ENCODE measurements at regions of chr1 and their contacts with region 1.

Region 1: GRCh38 chr1:72282271-72283021 is at the start of gene NEGR1:
- DNase-seq: peak; percentile 95
- H3K4me3 ChIP-seq: peak within 1 kb of the TSS; percentile 63 to 78 (median 70)
- H3K27ac ChIP-seq: peak within 1 kb of the TSS; percentile 89
- H3K4me1 ChIP-seq: peaks cover 15% of the 10 kb centered on the region
- H3K27me3 ChIP-seq: no peaks in the 10 kb centered on the region
- CTCF ChIP-seq: peak in 1 of 2 donors; percentile 32
- total RNA-seq, gene NEGR1: 0.17 to 2.0 TPM

Region 2: DNA sequence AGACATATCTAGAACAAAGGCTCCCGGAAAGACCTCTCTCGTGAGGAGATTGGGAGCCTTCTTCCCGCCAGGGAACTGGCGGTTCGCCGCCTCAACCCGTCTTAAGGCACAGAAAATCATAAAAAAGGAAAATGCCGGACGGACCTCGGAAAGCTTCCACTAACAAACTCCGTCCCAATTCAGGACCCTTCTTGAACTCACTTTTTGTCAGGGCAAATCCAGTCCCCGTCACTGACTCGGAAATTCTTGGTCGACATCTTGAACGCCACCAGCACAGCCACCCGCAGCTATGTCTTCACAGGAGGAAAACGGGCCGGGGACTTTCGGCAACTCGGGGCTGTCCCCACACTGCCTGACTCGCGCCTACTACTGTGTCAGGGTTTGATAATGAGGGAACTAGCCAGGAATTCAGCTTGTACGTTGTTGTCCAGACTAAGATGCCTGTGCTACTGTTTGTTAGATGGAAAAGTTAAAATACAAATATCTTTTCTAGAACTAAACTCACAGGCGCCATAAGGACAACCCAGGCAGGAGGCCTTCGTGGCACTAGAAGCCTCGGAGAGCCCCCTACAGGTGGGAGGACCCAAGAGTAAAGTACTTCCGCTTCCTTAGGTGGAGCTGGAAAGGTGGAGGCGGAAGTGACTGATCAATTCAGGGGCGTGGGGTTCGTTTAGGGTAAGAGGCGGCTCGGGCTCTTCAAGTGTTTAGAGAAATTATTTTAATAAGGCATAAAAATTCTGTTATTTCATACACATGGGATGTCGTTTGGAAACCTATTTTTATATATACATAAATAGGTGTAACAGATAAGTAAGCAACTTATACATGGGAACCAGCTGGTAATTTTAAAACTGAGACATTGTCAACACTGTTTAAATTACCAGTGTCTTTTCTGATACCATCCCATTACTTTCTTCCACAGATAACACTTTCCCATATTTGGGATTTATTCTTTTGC is 1201.4 kb before region 1 on chr1 and contains the start of gene ZRANB2:
- CTCF ChIA-PET with region 1: no interaction called
- dilution Hi-C with region 1: no loop called
- in situ Hi-C with region 1: no loop called
- intact Hi-C with region 1: loop called (anchors 10 kb)
- DNase-seq: peak; percentile 90
- H3K4me3 ChIP-seq: peak within 1 kb of the TSS; percentile 83 to 99 (median 92)
- H3K27ac ChIP-seq: peak within 1 kb of the TSS; percentile 98
- H3K4me1 ChIP-seq: peaks cover 7% of the 10 kb centered on the region
- H3K27me3 ChIP-seq: no peaks in the 10 kb centered on the region
- CTCF ChIP-seq: peak; percentile 60 to 75
- total RNA-seq, gene ZRANB2: 40.7 to 80.8 TPM

Region 3: GRCh38 chr1:71921935-71922559 is 360.4 kb before region 1 on chr1:
- CTCF ChIA-PET with region 1: no interaction called
- dilution Hi-C with region 1: no loop called
- in situ Hi-C with region 1: no loop called
- intact Hi-C with region 1: no loop called
- DNase-seq: no peak
- H3K4me3 ChIP-seq: no peak overlapping the region
- H3K27ac ChIP-seq: no peak overlapping the region
- H3K4me1 ChIP-seq: no peaks in the 10 kb centered on the region
- H3K27me3 ChIP-seq: no peaks in the 10 kb centered on the region
- CTCF ChIP-seq: no peak

Region 4: DNA sequence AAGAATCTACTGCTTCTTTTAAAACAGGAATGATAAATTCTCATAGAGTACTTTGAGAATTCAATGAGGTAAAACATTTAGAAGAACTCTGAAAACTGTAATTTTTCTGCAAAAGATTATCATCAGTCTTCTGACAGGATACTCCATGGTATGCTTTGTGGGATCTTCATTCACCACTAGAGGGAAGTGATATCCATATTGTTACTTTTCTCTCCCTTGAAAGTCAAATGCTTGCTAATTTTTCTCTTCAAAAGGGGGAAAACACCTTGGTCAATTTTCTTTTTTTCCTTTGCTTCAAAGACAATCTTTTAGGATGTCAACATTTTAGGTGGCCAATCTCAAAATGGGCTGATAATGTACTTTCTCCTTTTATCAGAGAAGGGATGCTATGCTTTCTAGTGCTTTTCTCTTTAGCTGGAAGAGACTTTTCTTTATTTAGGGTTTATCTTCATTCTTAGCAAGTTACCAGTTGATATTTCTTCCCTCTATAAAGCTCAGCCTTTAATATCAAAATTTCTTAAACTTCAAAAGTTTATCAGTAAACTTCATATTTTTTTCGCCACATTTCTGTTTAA is 95.6 kb before region 1 on chr1:
- CTCF ChIA-PET with region 1: no interaction called
- dilution Hi-C with region 1: no loop called
- in situ Hi-C with region 1: no loop called
- intact Hi-C with region 1: loop called (anchors 5 kb)
- DNase-seq: peak; percentile 19
- H3K4me3 ChIP-seq: no peak overlapping the region
- H3K27ac ChIP-seq: no peak overlapping the region
- H3K4me1 ChIP-seq: no peaks in the 10 kb centered on the region
- H3K27me3 ChIP-seq: no peaks in the 10 kb centered on the region
- CTCF ChIP-seq: peak; percentile 53 to 72

Region 5: DNA sequence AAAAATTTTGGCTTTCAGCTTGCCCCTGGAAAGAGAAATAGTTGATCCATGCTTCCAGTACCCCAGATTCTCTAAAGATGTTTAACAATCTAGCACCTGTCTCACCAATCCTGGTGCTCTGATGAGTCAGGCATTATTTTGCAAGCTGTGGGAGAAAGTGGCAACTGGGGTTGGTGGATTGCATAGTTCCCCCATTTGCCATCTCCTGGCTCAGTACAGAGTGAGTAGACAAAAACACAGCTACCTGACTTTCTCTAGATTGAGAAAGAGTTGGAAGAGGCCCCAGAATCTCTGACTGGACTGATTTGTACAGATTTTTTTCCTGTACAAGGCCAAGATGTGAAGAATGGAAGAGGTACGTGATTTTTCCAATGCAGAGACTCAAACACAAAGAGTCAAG is 75.0 kb after region 1 on chr1:
- CTCF ChIA-PET with region 1: no interaction called
- dilution Hi-C with region 1: no loop called
- in situ Hi-C with region 1: no loop called
- intact Hi-C with region 1: loop called (anchors 1 kb)
- DNase-seq: peak; percentile 92
- H3K4me3 ChIP-seq: no peak overlapping the region
- H3K27ac ChIP-seq: no peak overlapping the region
- H3K4me1 ChIP-seq: peaks cover 4% of the 10 kb centered on the region
- H3K27me3 ChIP-seq: no peaks in the 10 kb centered on the region
- CTCF ChIP-seq: no peak

Region 6: GRCh38 chr1:72433591-72433990 is 151.1 kb after region 1 on chr1:
- CTCF ChIA-PET with region 1: no interaction called
- dilution Hi-C with region 1: no loop called
- in situ Hi-C with region 1: no loop called
- intact Hi-C with region 1: loop called (anchors 1 kb)
- DNase-seq: peak; percentile 22
- H3K4me3 ChIP-seq: no peak overlapping the region
- H3K27ac ChIP-seq: no peak overlapping the region
- H3K4me1 ChIP-seq: no peaks in the 10 kb centered on the region
- H3K27me3 ChIP-seq: no peaks in the 10 kb centered on the region
- CTCF ChIP-seq: no peak

Measured in mammary epithelial cell (primary cell).